Activated CD8-positive, alpha-beta T cell treated with anti-CD3 and anti-CD28 coated beads, Interleukin-2, amount 10 ng/mL, durations not matched to agents 7 days and 5 days (primary cell): ENCODE measurements at regions of chr18 and their contacts with region 1.

Region 1: DNA sequence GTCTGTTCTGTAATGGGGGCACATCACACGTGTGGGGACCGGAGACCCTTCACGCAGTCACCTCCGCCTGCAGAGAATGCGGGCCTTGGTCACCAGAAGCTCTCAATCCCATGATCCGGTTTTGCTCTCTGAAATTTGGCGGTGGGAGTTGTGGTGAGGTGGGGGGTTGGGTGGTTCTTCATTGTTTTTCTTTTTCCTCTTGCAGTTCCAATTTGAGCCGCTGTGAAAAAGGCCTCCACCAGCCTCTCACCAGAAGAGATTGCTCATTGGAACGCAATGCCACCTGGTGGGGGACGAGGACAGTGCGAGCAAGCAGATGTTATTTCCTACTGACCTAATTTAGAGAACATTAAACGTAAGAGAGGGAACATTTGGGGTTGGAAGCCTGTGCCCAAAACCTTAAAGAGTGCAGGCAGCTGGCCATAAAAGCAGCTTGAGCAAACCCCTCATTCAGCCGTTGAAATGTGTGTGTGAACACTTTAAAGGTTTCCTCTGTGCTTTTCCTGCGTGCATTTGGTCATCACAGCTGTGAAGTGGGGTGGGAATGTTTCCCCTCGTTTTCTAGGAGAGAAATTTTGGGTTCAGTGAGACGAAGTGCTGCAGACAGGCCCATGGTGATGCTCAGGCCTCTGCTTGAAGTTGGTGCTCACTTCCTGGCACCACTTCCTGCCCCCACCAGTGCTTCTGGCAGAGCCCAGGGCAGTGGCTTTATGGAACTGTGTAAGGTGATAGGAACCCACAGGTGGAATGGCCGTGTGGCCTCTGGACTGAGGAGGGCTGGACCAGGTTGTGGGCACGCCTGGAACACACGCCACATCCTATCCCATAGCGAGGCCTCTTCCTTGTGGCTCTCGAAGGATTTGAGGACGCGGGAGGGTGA is 61.7 kb downstream of the ZCCHC2 start:
- DNase-seq: peak; percentile 90
- ATAC-seq: peak; percentile 91
- H3K4me3 Mint-ChIP-seq: peak overlapping the region; percentile 31
- H3K27ac Mint-ChIP-seq: peak overlapping the region; percentile 78
- H3K4me1 Mint-ChIP-seq: peaks cover 39% of the 10 kb centered on the region
- H3K27me3 Mint-ChIP-seq: no peaks in the 10 kb centered on the region

Region 2: GRCh38 chr18:62571648-62572047 is 12.8 kb before region 1 on chr18:
- CTCF ChIA-PET with region 1: interaction called, 31 read pairs
- POLR2A ChIA-PET with region 1: no interaction called
- DNase-seq: no peak
- ATAC-seq: no peak
- H3K4me3 Mint-ChIP-seq: no peak overlapping the region
- H3K27ac Mint-ChIP-seq: no peak overlapping the region
- H3K4me1 Mint-ChIP-seq: peaks cover 9% of the 10 kb centered on the region
- H3K27me3 Mint-ChIP-seq: no peaks in the 10 kb centered on the region